Activated CD4-positive, alpha-beta memory T cell treated with anti-CD3 and anti-CD28 coated beads for 36 hours (primary cell): ENCODE measurements at regions of chr1 and their contacts with region 1.

Region 1: DNA sequence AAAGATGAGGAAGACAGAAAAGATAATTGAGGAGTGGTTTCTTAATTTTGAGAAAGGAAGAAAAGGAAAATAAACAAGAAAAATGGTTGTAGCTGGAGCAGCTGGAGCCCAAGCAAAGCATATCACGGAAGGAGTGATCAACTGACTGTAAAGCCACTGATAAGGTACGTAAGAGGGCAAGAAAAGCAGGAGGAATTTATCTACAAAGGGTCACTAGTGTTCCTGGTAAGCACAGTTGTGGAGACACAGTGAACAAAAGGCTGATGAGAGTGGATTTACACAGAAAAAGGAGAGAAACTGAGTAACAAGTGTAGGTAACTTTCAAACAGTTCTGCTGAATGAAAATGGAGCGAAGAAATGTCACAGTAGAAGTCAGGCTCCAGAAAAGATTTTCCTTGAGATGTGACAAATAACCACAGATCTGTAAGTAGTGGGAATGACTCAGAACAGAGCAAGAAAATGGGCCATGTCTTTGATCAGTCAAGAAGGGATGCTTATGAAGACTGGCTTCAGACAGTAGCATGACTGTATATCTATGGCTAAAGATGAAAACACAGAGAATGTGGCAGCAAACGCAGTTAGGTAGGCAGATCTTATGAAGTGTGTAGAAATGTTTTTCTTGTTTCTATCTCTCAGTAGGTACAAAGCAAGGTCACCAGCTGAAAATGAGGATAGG is 45.6 kb upstream of the RBM34 start:
- DNase-seq: no peak
- H3K4me3 Mint-ChIP-seq: no peak overlapping the region
- H3K27ac Mint-ChIP-seq: peak overlapping the region; percentile 89
- H3K4me1 Mint-ChIP-seq: peaks cover 30% of the 10 kb centered on the region
- H3K27me3 Mint-ChIP-seq: no peaks in the 10 kb centered on the region

Region 2: DNA sequence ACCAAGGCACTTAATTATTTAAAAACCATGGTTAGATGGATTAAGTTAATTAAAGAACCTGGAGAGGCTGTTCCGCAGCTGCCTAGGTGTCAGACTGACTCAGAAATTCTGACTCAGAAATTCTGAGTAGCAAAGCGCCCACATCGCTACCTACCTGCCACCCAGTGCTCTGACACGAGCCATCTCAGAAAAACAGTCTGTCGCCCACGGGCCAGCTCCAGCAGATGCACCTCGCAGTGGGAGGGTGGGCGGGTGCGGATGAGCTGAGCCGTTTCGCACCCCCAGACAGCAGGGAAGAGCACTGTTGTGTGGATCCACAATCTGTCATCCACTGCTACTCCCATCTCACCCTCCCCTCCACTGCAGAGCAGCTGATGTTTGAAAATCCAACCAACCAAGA is 1579.3 kb before region 1 on chr1:
- CTCF ChIA-PET with region 1: no interaction called
- POLR2A ChIA-PET with region 1: no interaction called
- intact Hi-C with region 1: no loop called
- DNase-seq: peak; percentile 80
- H3K4me3 Mint-ChIP-seq: no peak overlapping the region
- H3K27ac Mint-ChIP-seq: peak overlapping the region; percentile 81
- H3K4me1 Mint-ChIP-seq: peaks cover 12% of the 10 kb centered on the region
- H3K27me3 Mint-ChIP-seq: peaks cover 8% of the 10 kb centered on the region

Region 3: DNA sequence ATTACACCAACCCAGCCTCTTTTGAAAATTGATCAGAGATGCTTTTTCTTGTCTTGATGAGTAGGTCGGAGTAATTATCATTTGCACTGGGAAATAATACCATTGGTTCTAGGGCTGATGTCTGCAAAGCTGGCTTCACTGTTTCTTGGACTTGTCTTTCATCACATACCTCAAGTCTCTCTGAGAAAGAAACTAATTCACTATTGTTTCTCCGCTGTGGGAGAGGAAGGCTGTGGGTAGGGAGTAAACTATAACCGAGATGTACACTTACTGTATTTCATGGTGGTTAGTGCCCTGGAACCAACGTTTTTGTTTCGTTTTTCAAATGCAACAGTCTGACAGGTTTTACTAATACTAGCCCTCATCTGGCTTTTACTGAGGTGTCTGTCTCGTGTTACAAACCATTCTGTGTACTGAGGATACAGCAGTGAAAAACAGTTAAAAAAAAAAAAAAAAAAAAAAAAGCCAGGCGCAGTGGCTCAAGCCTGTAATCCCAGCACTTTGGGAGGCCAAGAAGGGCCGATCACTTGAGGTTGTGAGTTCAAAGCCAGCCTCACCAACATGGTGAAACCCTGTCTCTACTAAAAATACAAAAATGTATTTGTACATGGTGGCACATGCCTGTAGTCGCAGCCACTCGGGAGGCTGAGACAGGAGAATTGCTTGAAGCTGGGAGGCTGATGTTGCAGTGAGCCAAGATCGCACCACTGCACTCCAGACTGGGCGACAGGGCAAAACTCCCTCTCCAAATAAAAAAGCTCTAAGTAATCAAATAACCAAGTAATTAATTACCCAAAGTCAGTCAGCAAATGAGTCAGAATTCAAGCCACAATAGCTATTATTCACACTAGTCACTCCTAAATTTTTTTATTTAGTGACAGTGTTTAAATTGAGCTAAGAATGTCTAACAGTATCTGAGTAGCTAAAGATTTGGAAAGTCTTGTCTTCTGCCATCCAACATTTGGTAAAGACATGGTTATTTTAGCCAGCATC is 101.3 kb before region 1 on chr1:
- CTCF ChIA-PET with region 1: interaction called, 5 read pairs
- POLR2A ChIA-PET with region 1: no interaction called
- intact Hi-C with region 1: loop called (anchors 2 kb)
- DNase-seq: peak; percentile 40
- H3K4me3 Mint-ChIP-seq: peak overlapping the region; percentile 67
- H3K27ac Mint-ChIP-seq: peak overlapping the region; percentile 68
- H3K4me1 Mint-ChIP-seq: peaks cover 39% of the 10 kb centered on the region
- H3K27me3 Mint-ChIP-seq: no peaks in the 10 kb centered on the region

Region 4: GRCh38 chr1:235128456-235129328 is 78.0 kb before region 1 on chr1 and contains the start of gene TOMM20:
- CTCF ChIA-PET with region 1: interaction called, 3 read pairs
- POLR2A ChIA-PET with region 1: no interaction called
- intact Hi-C with region 1: loop called (anchors 2 kb)
- DNase-seq: peak; percentile 98
- H3K4me3 Mint-ChIP-seq: peak within 1 kb of the TSS; percentile 86
- H3K27ac Mint-ChIP-seq: peak within 1 kb of the TSS; percentile 94
- H3K4me1 Mint-ChIP-seq: peaks cover 41% of the 10 kb centered on the region
- H3K27me3 Mint-ChIP-seq: no peaks in the 10 kb centered on the region
- total RNA-seq, gene TOMM20: 127 to 142 TPM

Region 5: GRCh38 chr1:235190431-235190830 is 16.2 kb before region 1 on chr1:
- CTCF ChIA-PET with region 1: no interaction called
- POLR2A ChIA-PET with region 1: no interaction called
- intact Hi-C with region 1: loop called (anchors 2 kb)
- DNase-seq: no peak
- H3K4me3 Mint-ChIP-seq: no peak overlapping the region
- H3K27ac Mint-ChIP-seq: no peak overlapping the region
- H3K4me1 Mint-ChIP-seq: peaks cover 8% of the 10 kb centered on the region
- H3K27me3 Mint-ChIP-seq: no peaks in the 10 kb centered on the region

Region 6: GRCh38 chr1:235495551-235495950 is 288.9 kb after region 1 on chr1:
- CTCF ChIA-PET with region 1: no interaction called
- POLR2A ChIA-PET with region 1: no interaction called
- intact Hi-C with region 1: loop called (anchors 2 kb)
- DNase-seq: no peak
- H3K4me3 Mint-ChIP-seq: no peak overlapping the region
- H3K27ac Mint-ChIP-seq: no peak overlapping the region
- H3K4me1 Mint-ChIP-seq: peaks cover 20% of the 10 kb centered on the region
- H3K27me3 Mint-ChIP-seq: no peaks in the 10 kb centered on the region